CD8-positive, alpha-beta memory T cell (primary cell): ENCODE measurements at regions of chr17 and their contacts with region 1.

Region 1: DNA sequence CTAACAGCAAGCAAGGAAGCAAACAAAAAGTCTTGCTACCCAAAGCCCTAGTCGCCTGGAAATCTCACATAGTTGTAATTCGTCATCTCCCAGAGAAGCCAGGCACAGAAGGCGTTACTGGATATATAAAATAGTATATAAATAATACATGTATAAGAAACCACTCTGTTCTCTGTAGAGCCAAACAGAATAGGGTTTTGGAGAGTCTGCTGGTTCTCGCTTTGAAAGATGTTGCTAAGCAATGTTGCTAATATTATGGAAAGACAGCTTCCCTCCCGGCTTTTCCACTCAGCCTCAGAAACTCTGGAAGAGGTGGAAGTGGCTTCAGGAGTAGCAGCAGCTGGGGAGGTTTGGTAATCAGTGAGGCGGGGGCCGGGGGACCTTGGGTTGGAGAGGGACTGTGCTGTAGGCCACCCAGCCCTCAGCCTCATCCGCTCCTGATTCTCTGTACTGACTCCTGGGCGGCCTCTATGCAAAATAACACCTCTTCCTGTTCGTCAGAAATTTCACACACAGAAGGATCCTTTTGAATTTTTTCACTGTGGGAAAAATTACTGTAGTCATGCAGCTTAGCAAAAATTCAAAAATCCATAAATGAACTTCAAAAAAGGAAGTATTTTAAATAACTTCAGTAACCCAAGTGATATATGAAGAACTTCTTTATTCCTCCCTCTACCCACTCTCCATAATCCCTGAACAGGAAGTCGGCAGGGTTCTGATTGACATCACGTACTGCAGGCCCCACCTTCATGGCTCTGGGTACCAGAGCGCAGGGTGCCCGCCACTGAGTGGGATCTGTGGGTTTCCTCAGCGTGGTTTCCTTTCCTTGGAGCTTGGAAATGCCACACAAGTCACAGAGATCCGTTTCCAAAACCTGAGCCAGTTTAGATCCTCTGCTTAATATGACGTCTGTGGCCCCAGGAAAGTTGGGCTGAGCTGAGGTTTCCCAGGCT is 51.4 kb downstream of the RAP1GAP2 start:
- DNase-seq: no peak
- H3K4me3 ChIP-seq: no peak overlapping the region
- H3K4me3 Mint-ChIP-seq: no peak overlapping the region
- H3K27ac ChIP-seq: no peak overlapping the region
- H3K27ac Mint-ChIP-seq: peak overlapping the region in 1 of 8 donors; percentile 58
- H3K4me1 ChIP-seq: peaks cover 6% of the 10 kb centered on the region
- H3K4me1 Mint-ChIP-seq: peaks cover 21 to 35% (median 30%) of the 10 kb centered on the region in 3 donors
- H3K27me3 ChIP-seq: no peaks in the 10 kb centered on the region
- H3K27me3 Mint-ChIP-seq: peaks cover 8% of the 10 kb centered on the region in 2 donors

Region 2: DNA sequence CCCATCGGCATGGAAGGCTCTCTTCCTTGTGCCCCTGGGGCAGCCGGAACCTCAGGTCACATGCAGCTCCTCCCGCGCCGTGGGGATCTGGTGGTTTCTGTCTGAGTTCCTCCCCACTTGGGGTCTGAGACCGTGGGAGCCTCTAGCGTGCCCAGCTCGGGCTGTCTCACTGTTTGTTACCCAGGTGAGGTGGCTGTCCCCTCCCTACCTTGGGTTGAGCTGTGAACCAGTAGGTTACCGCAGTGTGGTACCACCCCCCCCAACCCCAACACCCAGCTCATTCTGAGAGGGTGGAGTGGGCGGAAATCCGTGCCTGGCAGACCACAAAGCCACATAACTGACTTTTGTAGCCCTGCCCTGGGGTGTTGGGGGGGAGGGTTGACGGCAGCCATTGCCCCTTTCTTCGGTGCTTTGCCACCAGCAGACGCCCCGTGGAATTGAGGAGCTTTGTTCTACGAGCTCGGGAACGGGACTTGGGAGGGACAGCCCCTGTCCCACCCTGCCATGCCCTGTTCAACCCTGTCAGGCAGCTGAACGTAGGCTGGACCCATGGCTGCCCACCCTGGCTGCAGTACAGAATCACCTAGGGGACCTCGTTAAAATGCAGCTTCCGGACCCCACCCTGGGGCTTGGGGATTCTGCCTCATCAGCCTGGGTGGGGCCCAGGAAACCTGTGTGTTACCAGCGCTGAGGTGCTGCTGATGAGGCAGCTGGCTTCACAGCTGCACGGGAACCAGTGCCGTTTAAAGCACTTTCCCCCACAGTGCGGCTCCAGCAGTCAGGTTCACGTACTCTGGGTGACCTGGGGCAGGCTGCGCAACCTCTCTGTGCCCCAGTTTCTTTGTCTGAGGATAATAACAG is 32.9 kb before region 1 on chr17:
- CTCF ChIA-PET with region 1: interaction called, 10 read pairs
- POLR2A ChIA-PET with region 1: interaction called, 5 read pairs
- DNase-seq: peak; percentile 90 to 99 (median 98)
- H3K4me3 ChIP-seq: peak overlapping the region; percentile 68
- H3K4me3 Mint-ChIP-seq: peak overlapping the region; percentile 73 to 93 (median 84)
- H3K27ac ChIP-seq: peak overlapping the region; percentile 78
- H3K27ac Mint-ChIP-seq: peak overlapping the region; percentile 83 to 96 (median 91)
- H3K4me1 ChIP-seq: peaks cover 30% of the 10 kb centered on the region
- H3K4me1 Mint-ChIP-seq: peaks cover 33 to 53% (median 45%) of the 10 kb centered on the region in 3 donors
- H3K27me3 ChIP-seq: no peaks in the 10 kb centered on the region
- H3K27me3 Mint-ChIP-seq: no peaks in the 10 kb centered on the region

Region 3: GRCh38 chr17:2828397-2829038 is 19.1 kb before region 1 on chr17:
- CTCF ChIA-PET with region 1: interaction called, 12 read pairs
- POLR2A ChIA-PET with region 1: no interaction called
- DNase-seq: peak; percentile 62 to 80 (median 68)
- H3K4me3 ChIP-seq: no peak overlapping the region
- H3K4me3 Mint-ChIP-seq: peak overlapping the region in 6 of 7 donors; percentile 41 to 77 (median 58)
- H3K27ac ChIP-seq: no peak overlapping the region
- H3K27ac Mint-ChIP-seq: peak overlapping the region in 5 of 8 donors; percentile 30 to 73 (median 54)
- H3K4me1 ChIP-seq: peaks cover 13% of the 10 kb centered on the region
- H3K4me1 Mint-ChIP-seq: peaks cover 24 to 42% (median 35%) of the 10 kb centered on the region in 3 donors
- H3K27me3 ChIP-seq: no peaks in the 10 kb centered on the region
- H3K27me3 Mint-ChIP-seq: no peaks in the 10 kb centered on the region

Region 4: DNA sequence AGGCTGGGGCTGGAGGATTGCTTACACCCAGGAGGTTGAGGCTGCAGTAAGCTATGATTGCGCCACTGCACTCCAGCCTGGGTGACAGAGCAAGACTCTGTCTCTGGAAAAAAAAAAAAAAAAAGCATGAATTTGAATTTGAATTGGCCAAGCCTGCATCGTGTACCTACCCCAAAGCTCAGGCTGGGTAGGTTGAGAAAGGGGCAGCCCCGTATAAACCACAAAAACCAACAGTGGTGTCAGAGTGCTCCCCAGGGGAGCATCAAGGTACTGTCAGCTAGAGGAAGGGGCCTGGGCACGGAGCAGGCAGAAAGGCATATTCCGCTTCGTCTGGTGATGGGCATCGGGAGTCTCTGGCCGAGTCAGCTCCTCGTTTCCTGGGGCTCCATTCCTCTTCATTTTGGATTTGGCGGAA is 10.5 kb before region 1 on chr17:
- CTCF ChIA-PET with region 1: interaction called, 13 read pairs
- POLR2A ChIA-PET with region 1: interaction called, 3 read pairs
- DNase-seq: peak in 4 of 5 donors; percentile 18 to 70 (median 52)
- H3K4me3 ChIP-seq: no peak overlapping the region
- H3K4me3 Mint-ChIP-seq: no peak overlapping the region
- H3K27ac ChIP-seq: no peak overlapping the region
- H3K27ac Mint-ChIP-seq: no peak overlapping the region
- H3K4me1 ChIP-seq: no peaks in the 10 kb centered on the region
- H3K4me1 Mint-ChIP-seq: peaks cover 16 to 20% (median 17%) of the 10 kb centered on the region in 3 donors
- H3K27me3 ChIP-seq: no peaks in the 10 kb centered on the region
- H3K27me3 Mint-ChIP-seq: peaks cover 0 to 1% of the 10 kb centered on the region in 2 donors

Region 5: DNA sequence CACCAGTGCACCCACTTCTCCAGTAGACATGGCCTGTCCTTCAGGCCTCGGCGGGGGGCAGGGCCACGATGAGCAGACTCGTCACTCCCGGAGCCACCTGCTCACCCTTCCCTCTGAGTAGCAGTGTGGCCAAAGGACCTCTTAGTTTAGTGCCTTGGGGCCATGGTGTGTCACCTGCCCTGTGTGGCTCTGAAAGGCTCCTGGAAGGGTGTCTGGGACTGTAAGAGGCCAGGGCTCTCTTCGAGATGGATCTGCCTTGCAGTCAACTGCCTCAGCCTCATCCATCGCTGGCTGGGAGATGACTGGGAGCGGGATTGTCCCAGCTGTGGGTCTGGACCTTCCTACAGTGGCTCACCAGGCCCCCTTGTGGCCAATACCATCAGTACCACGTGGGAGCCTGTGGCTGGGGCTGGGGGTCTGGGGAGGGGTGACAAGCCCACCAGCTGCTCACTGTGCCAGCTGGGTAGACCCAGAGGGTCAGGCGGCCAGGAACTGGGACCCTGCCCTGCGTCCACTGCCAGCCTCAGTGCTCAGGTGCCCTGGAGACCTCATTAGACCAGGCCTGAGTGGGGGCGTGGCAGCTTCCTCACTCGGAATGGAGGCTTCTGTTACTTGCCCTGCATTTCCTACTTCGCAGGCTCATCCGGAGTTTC is 82.3 kb after region 1 on chr17:
- CTCF ChIA-PET with region 1: interaction called, 13 read pairs
- POLR2A ChIA-PET with region 1: no interaction called
- DNase-seq: peak in 1 of 5 donors; percentile 53
- H3K4me3 ChIP-seq: no peak overlapping the region
- H3K4me3 Mint-ChIP-seq: no peak overlapping the region
- H3K27ac ChIP-seq: no peak overlapping the region
- H3K27ac Mint-ChIP-seq: no peak overlapping the region
- H3K4me1 ChIP-seq: peaks cover 7% of the 10 kb centered on the region
- H3K4me1 Mint-ChIP-seq: peaks cover 13 to 38% (median 33%) of the 10 kb centered on the region in 3 donors
- H3K27me3 ChIP-seq: no peaks in the 10 kb centered on the region
- H3K27me3 Mint-ChIP-seq: no peaks in the 10 kb centered on the region

Region 6: GRCh38 chr17:3012926-3013581 is 165.4 kb after region 1 on chr17:
- CTCF ChIA-PET with region 1: interaction called, 28 read pairs
- POLR2A ChIA-PET with region 1: no interaction called
- DNase-seq: peak; percentile 18 to 73 (median 30)
- H3K4me3 ChIP-seq: no peak overlapping the region
- H3K4me3 Mint-ChIP-seq: no peak overlapping the region
- H3K27ac ChIP-seq: no peak overlapping the region
- H3K27ac Mint-ChIP-seq: no peak overlapping the region
- H3K4me1 ChIP-seq: no peaks in the 10 kb centered on the region
- H3K4me1 Mint-ChIP-seq: no peaks in the 10 kb centered on the region
- H3K27me3 ChIP-seq: no peaks in the 10 kb centered on the region
- H3K27me3 Mint-ChIP-seq: no peaks in the 10 kb centered on the region